ENCODE measurements at regions of chr4 and their contacts with region 1.

Region 1: GRCh38 chr4:148441986-148442831 is at the start of gene NR3C2:
- DNase-seq: peak; percentile 99 to 100 (median 100)
- ATAC-seq: peak; percentile 90 to 97 (median 96)
- H3K4me3 ChIP-seq: peak within 1 kb of the TSS; percentile 87 to 99 (median 95)
- H3K27ac ChIP-seq: peak within 1 kb of the TSS; percentile 81 to 98 (median 90)
- H3K4me1 ChIP-seq: peaks cover 0 to 53% (median 36%) of the 10 kb centered on the region in 12 donors
- H3K27me3 ChIP-seq: peaks cover 0 to 25% (median 0%) of the 10 kb centered on the region in 9 donors
- CTCF ChIP-seq: no peak
- POLR2A ChIP-seq: peak; percentile 95 to 100
- total RNA-seq, gene NR3C2: 14.7 to 26.5 (median 20.0) TPM

Region 2: GRCh38 chr4:148056869-148057268 is 385.3 kb before region 1 on chr4:
- intact Hi-C with region 1: loop called in 4 of 10 experiments (anchors 10 kb)
- DNase-seq: peak in 4 of 5 donors; percentile 53 to 75 (median 59)
- ATAC-seq: peak in 3 of 4 donors; percentile 51 to 70 (median 53)
- H3K4me3 ChIP-seq: no peak overlapping the region
- H3K27ac ChIP-seq: peak overlapping the region in 4 of 12 donors; percentile 4 to 84 (median 14)
- H3K4me1 ChIP-seq: peaks cover 3 to 93% (median 67%) of the 10 kb centered on the region in 12 donors
- H3K27me3 ChIP-seq: no peaks in the 10 kb centered on the region
- CTCF ChIP-seq: peak in 7 of 12 donors; percentile 12 to 56 (median 36)
- POLR2A ChIP-seq: no peak

Region 3: GRCh38 chr4:148216866-148217814 is 225.1 kb before region 1 on chr4:
- intact Hi-C with region 1: loop called in 2 of 10 experiments (anchors 5 to 10 kb)
- DNase-seq: no peak
- ATAC-seq: peak in 3 of 4 donors; percentile 22 to 41 (median 36)
- H3K4me3 ChIP-seq: peak overlapping the region in 9 of 12 donors; percentile 26 to 50 (median 36)
- H3K27ac ChIP-seq: peak overlapping the region in 11 of 12 donors; percentile 1 to 77 (median 38)
- H3K4me1 ChIP-seq: peaks cover 0 to 49% (median 32%) of the 10 kb centered on the region in 12 donors
- H3K27me3 ChIP-seq: no peaks in the 10 kb centered on the region
- CTCF ChIP-seq: no peak
- POLR2A ChIP-seq: no peak

Region 4: GRCh38 chr4:148288448-148288847 is 153.8 kb before region 1 on chr4:
- intact Hi-C with region 1: loop called in 8 of 10 experiments (anchors 5 to 10 kb)
- DNase-seq: peak; percentile 33 to 73 (median 66)
- ATAC-seq: peak; percentile 62 to 81 (median 74)
- H3K4me3 ChIP-seq: no peak overlapping the region
- H3K27ac ChIP-seq: peak overlapping the region in 1 of 12 donors; percentile 10
- H3K4me1 ChIP-seq: peaks cover 0 to 62% (median 35%) of the 10 kb centered on the region in 12 donors
- H3K27me3 ChIP-seq: no peaks in the 10 kb centered on the region
- CTCF ChIP-seq: no peak
- POLR2A ChIP-seq: no peak

Region 5: DNA sequence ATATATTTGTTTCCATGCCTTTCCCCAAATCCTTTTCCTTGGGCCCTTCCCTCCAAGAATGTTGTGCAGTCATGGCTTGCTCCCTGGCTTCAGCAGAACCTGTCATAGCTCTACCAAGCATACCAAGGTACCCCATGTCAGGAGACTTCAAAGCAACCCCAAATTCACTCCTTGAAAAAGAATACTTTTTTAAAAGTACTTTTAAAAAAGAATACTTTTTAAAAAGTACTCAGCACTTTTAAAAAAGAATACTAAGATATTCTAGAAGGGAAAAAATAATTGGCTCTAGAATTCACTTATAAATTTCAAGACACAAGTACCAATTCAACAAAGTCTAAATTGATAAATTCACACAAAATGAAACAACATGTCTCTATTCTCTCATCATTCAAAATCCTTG is 76.0 kb before region 1 on chr4:
- intact Hi-C with region 1: loop called in 1 of 10 experiments (anchors 5 kb)
- DNase-seq: no peak
- ATAC-seq: no peak
- H3K4me3 ChIP-seq: no peak overlapping the region
- H3K27ac ChIP-seq: no peak overlapping the region
- H3K4me1 ChIP-seq: peaks cover 0 to 21% (median 13%) of the 10 kb centered on the region in 12 donors
- H3K27me3 ChIP-seq: no peaks in the 10 kb centered on the region
- CTCF ChIP-seq: no peak
- POLR2A ChIP-seq: no peak

Region 6: DNA sequence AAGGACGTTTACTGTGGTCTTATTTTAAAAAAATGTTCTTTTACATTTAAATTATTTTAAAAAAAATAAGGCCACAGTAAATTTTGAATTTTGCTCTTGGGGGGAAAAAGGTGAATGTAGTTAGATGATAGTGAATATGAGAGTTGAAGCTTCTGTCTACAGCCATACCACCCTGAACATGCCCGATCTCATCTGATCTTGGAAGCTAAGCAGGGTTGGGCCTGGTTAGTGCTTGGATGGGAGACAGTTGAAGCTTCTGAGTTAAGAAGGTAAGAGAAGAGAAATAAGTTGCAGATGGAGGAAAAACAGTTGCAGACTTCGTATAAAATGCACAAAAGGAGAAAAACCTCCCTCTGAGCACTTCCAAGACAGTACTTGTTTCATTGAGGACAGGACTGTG is 115.6 kb after region 1 on chr4:
- intact Hi-C with region 1: no loop called
- DNase-seq: no peak
- ATAC-seq: no peak
- H3K4me3 ChIP-seq: no peak overlapping the region
- H3K27ac ChIP-seq: no peak overlapping the region
- H3K4me1 ChIP-seq: no peaks in the 10 kb centered on the region
- H3K27me3 ChIP-seq: no peaks in the 10 kb centered on the region
- CTCF ChIP-seq: no peak
- POLR2A ChIP-seq: no peak

Measured in heart left ventricle (tissue), 16 donors.